ENCODE measurements at regions of chr13 and their contacts with region 1.

Region 1: GRCh38 chr13:100514788-100515409 is 73.7 kb downstream of the GGACT start:
- DNase-seq: peak; percentile 49
- ATAC-seq: peak; percentile 82
- H3K4me3 Mint-ChIP-seq: no peak overlapping the region
- H3K27ac Mint-ChIP-seq: no peak overlapping the region
- H3K4me1 Mint-ChIP-seq: peaks cover 2% of the 10 kb centered on the region
- H3K27me3 Mint-ChIP-seq: no peaks in the 10 kb centered on the region
- CTCF ChIP-seq: peak; percentile 78

Region 2: DNA sequence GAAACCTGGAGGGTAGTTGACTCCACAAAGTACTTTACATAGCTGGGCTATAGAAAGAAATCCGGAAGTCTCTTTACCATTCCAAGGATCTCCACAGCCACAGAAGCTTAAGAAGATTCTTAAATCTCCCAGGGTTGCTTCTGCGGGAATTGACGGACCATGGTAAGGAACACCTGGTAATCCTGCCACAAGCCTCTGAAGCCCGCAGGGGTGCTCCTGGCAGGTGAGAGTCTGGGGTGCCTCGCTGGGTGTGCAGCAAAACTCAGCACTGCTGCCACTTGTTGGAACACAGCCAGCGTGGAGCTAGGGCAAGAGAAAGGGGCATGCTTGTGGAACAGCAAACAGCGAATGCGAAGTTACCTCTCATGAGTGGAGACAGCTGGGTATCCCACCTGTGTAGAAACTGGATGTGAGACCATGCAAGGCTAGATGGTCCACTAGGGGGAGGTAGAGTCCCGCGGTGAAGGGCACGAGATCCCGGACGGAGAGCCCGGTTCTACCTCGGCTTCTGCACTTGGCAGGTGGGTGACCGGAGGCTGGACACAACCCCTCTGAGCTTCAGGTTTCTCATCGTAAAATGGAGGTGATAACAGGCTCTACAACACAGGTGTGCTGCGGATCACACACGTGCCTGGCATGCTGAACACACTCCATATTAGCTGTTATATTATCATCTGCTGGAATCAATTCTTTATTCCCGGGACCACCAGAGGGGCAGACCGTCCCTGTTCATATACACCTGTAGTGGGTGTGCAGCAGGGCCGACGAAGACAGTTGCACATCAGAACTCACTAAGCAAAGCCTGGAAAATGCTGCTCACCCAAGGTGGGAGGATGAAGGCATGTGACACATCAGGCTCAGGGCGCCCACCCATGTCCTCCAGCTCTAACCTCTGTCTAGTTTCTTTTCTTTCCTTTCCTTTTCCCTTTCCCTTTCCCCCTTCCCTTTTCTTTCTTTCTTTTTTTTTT is 1338.3 kb before region 1 on chr13:
- CTCF ChIA-PET with region 1: interaction called, 3 read pairs
- POLR2A ChIA-PET with region 1: no interaction called
- intact Hi-C with region 1: loop called (anchors 2 kb)
- DNase-seq: peak; percentile 64
- ATAC-seq: peak; percentile 90
- H3K4me3 Mint-ChIP-seq: peak overlapping the region; percentile 58
- H3K27ac Mint-ChIP-seq: peak overlapping the region; percentile 24
- H3K4me1 Mint-ChIP-seq: peaks cover 43% of the 10 kb centered on the region
- H3K27me3 Mint-ChIP-seq: peaks cover 2% of the 10 kb centered on the region
- CTCF ChIP-seq: no peak

Region 3: GRCh38 chr13:99442273-99442895 is 1072.5 kb before region 1 on chr13:
- CTCF ChIA-PET with region 1: interaction called, 7 read pairs
- POLR2A ChIA-PET with region 1: no interaction called
- intact Hi-C with region 1: loop called (anchors 1 kb)
- DNase-seq: no peak
- ATAC-seq: peak; percentile 78
- H3K4me3 Mint-ChIP-seq: no peak overlapping the region
- H3K27ac Mint-ChIP-seq: no peak overlapping the region
- H3K4me1 Mint-ChIP-seq: peaks cover 16% of the 10 kb centered on the region
- H3K27me3 Mint-ChIP-seq: peaks cover 2% of the 10 kb centered on the region
- CTCF ChIP-seq: peak; percentile 99

Region 4: DNA sequence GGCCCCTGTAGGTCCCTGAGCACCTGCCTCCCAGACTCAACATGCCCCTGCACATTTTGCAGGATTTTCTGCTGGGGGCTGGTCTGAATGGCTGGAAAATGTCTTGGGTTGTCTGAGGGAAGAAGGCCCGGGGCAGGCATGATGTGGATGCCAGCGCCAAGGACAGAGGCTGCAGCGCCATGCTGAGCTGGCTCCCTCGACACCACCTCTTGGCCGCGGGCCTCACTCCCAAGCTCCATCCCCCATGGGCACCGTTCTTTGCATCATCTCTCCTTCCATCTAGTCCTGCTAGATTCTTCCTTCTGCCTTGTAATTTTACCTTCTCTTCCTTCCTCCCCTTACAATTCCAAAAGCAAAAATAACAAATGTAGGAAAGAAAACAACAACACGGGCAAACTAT is 613.9 kb before region 1 on chr13:
- CTCF ChIA-PET with region 1: interaction called, 10 read pairs
- POLR2A ChIA-PET with region 1: no interaction called
- intact Hi-C with region 1: loop called (anchors 1 kb)
- DNase-seq: no peak
- ATAC-seq: no peak
- H3K4me3 Mint-ChIP-seq: no peak overlapping the region
- H3K27ac Mint-ChIP-seq: no peak overlapping the region
- H3K4me1 Mint-ChIP-seq: no peaks in the 10 kb centered on the region
- H3K27me3 Mint-ChIP-seq: peaks cover 62% of the 10 kb centered on the region
- CTCF ChIP-seq: no peak

Region 5: DNA sequence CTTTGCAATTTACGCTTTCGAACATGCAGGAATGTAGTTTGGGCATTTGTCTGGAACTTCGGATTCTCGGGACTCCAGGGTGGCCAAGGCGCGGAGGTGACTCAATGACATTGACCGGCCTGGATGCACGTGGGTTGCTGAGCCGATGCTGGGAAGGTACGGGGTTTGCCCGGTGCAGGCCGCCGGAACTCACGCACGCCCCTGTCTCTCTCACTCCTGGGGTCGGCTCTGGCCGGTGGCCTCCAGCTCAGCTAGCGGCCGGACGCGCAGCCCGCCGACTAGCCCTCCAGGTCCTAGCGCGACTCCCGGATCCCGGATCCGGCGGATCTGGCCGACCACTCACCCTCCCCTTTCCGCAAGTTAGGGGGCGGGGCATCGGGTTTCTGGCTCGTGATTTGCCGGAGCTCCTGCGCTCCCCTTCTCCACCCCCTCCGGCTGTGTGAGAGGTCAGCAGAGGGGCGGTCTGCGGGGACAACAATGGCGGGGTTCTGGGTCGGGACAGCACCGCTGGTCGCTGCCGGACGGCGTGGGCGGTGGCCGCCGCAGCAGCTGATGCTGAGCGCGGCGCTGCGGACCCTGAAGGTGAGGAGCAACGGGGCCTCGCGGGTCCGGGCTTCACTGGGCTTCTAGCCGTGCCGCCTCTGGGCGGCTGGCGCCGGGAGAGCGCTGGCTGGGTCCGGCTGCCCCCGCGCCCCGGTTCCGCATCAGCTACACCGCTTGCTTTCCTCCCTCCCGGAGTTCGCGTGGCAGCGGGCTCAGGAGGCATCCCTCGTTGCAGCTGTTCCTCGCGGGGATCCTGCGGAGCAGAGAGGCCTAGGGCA is 426.0 kb before region 1 on chr13 and contains the start of gene PCCA:
- CTCF ChIA-PET with region 1: no interaction called
- POLR2A ChIA-PET with region 1: no interaction called
- intact Hi-C with region 1: loop called (anchors 10 kb)
- DNase-seq: peak; percentile 72
- ATAC-seq: peak; percentile 94
- H3K4me3 Mint-ChIP-seq: peak within 1 kb of the TSS; percentile 82
- H3K27ac Mint-ChIP-seq: peak within 1 kb of the TSS; percentile 37
- H3K4me1 Mint-ChIP-seq: peaks cover 16% of the 10 kb centered on the region
- H3K27me3 Mint-ChIP-seq: no peaks in the 10 kb centered on the region
- CTCF ChIP-seq: no peak
- total RNA-seq, gene PCCA: 11.4 and 15.3 TPM in 2 replicates